AG04450 (cell line): ENCODE measurements at regions of chr5 and their contacts with region 1.

Region 1: GRCh38 chr5:5497152-5497748 is 74.8 kb downstream of the ICE1 start:
- DNase-seq: no peak
- H3K4me3 ChIP-seq: no peak overlapping the region
- H3K27ac ChIP-seq: no peak overlapping the region
- H3K27me3 ChIP-seq: peaks cover 7% of the 10 kb centered on the region
- CTCF ChIP-seq: peak; percentile 80

Region 2: GRCh38 chr5:6576861-6577501 is 1079.7 kb after region 1 on chr5:
- CTCF ChIA-PET with region 1: interaction called, 22 read pairs
- POLR2A ChIA-PET with region 1: no interaction called
- DNase-seq: peak; percentile 13
- H3K4me3 ChIP-seq: no peak overlapping the region
- H3K27ac ChIP-seq: no peak overlapping the region
- H3K27me3 ChIP-seq: peaks cover 9% of the 10 kb centered on the region
- CTCF ChIP-seq: peak; percentile 69

Region 3: DNA sequence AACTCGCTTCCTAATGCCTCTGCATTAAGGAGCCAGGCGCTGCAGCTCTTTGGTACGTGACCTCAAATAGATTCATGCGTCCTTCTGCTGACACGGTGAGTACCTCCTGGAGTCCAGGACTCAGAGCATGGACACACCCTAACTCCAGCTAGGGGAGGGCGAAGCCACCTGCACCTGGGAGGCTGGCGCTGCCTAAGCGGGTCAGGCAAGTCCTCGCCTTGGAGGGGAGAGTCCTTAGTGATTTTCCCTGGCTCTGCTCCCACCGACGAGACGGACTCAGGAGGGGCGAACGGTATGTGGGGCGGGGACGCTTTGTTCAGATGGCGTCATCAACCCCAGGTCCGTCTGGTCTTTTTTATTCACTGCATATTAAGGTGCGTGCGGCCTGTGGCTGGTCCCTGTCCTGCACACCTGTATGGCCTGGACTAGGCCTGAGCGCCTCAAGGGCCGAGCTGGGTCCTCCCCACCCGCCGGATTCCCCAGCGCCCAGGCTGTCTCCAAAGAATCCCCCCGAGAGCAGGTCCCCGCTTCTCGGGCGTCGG is 1085.3 kb after region 1 on chr5:
- CTCF ChIA-PET with region 1: interaction called, 22 read pairs
- POLR2A ChIA-PET with region 1: no interaction called
- DNase-seq: no peak
- H3K4me3 ChIP-seq: peak overlapping the region; percentile 1; the same call in 1 of the 2 replicates
- H3K27ac ChIP-seq: no peak overlapping the region
- H3K27me3 ChIP-seq: peaks cover 37% of the 10 kb centered on the region
- CTCF ChIP-seq: no peak